ENCODE measurements at regions of chr10 and their contacts with region 1.

Region 1: GRCh38 chr10:18463673-18464211 is 187.6 kb downstream of the NSUN6 start:
- DNase-seq: peak; percentile 49
- ATAC-seq: peak; percentile 81

Region 2: DNA sequence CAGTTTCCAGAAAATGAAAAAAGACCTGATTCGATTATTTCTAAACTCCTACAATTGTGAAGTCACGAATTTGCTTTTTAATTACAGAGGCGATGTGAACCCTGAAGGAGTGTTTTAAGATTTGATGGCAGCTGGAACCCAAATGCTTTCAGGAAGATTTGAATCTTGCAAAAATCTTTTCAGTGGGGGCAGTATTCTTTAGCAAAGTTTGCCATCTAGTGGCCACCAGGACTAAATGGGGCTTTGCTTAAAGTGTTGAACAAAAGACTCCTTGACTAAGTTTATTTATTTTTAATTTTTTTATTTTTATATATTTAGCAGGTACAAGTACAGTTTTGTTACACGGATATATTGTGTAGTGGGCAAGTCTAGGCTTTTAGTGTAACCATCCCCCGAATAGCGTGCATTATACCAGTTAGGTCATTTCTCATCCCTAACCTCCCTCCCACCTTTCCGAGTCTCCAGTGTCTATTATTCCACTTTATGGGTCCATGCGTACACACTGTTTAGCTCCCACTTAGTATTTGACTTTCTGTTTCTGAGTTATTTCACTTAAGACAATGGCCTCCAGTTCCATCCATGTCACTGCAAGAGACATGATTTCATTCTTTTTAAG is 224.8 kb before region 1 on chr10:
- intact Hi-C with region 1: loop called (anchors 10 kb)
- DNase-seq: no peak
- ATAC-seq: peak; percentile 26

Region 3: GRCh38 chr10:18340496-18341051 is 123.2 kb before region 1 on chr10:
- intact Hi-C with region 1: loop called (anchors 10 kb)
- DNase-seq: peak; percentile 52
- ATAC-seq: peak; percentile 85